ENCODE measurements at regions of chr11 and their contacts with region 1.

Region 1: GRCh38 chr11:117098269-117099232 is at the start of gene SIK3:
- DNase-seq: peak; percentile 43 to 90
- H3K4me3 ChIP-seq: peak within 1 kb of the TSS; percentile 82 to 95 (median 90)
- H3K27ac ChIP-seq: peak within 1 kb of the TSS; percentile 94
- H3K4me1 ChIP-seq: peaks cover 5 to 15% (median 10%) of the 10 kb centered on the region in 4 experiments; a peak in 6 of 7 replicates
- H3K27me3 ChIP-seq: no peaks in the 10 kb centered on the region
- CTCF ChIP-seq: no peak
- EP300 ChIP-seq: 0 out of 3 replicates have a peak, but pooled peaks of 1 of the 2 experiments have one; percentile 39
- POLR2A ChIP-seq: peak in 1 of 2 experiments; percentile 61; a peak in 2 of 3 replicates
- RAD21 ChIP-seq: no peak; a peak in 1 of 4 replicates
- total RNA-seq, gene SIK3: 32.1 and 32.6 TPM in 2 replicates

Region 2: GRCh38 chr11:117083011-117083935 is 15.3 kb before region 1 on chr11:
- CTCF ChIA-PET with region 1: interaction called, 11 read pairs
- POLR2A ChIA-PET with region 1: interaction called, 9 read pairs
- DNase-seq: no peak
- H3K4me3 ChIP-seq: no peak overlapping the region
- H3K27ac ChIP-seq: no peak overlapping the region
- H3K4me1 ChIP-seq: peaks cover 0 to 2% (median 0%) of the 10 kb centered on the region in 4 experiments; a peak in 1 of 7 replicates
- H3K27me3 ChIP-seq: no peaks in the 10 kb centered on the region
- CTCF ChIP-seq: no peak
- EP300 ChIP-seq: no peak
- POLR2A ChIP-seq: no peak
- RAD21 ChIP-seq: no peak

Region 3: DNA sequence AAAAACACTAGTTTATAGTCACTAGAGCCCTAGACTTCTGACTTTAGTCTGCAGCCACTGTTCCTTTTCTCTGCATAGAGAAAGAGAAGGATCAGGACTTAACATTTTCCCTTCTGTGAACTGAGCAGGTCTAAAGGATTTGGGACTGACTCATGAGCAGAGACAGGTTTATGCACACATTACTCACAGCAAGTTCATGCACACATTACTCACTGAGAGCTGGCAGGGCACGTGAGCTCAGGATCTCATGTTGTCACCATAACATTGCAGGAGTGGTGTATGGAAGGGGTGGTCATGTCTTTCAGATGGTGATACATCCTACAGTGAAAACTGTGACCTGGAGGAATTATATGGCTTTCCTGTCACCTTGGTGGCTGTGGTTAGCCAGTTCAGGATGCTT is 285.5 kb after region 1 on chr11:
- CTCF ChIA-PET with region 1: no interaction called
- POLR2A ChIA-PET with region 1: no interaction called
- DNase-seq: no peak
- H3K4me3 ChIP-seq: no peak overlapping the region
- H3K27ac ChIP-seq: no peak overlapping the region
- H3K4me1 ChIP-seq: peaks cover 0 to 3% (median 0%) of the 10 kb centered on the region in 4 experiments; a peak in 3 of 7 replicates
- H3K27me3 ChIP-seq: no peaks in the 10 kb centered on the region
- CTCF ChIP-seq: no peak
- EP300 ChIP-seq: no peak
- POLR2A ChIP-seq: no peak
- RAD21 ChIP-seq: no peak

Measured in H1 (cell line).